HAP-1 (cell line): ENCODE measurements at regions of chrX and their contacts with region 1.

Region 1: GRCh38 chrX:54288277-54288676 is 69.6 kb downstream of the WNK3 start:
- DNase-seq: no peak
- H3K4me3 ChIP-seq: no peak overlapping the region
- H3K4me1 ChIP-seq: peaks cover 1% of the 10 kb centered on the region; the same call in 1 of the 2 replicates
- H3K27me3 ChIP-seq: no peaks in the 10 kb centered on the region

Region 2: GRCh38 chrX:53990171-53990570 is 298.1 kb before region 1 on chrX:
- in situ Hi-C with region 1: no loop called
- DNase-seq: no peak
- H3K4me3 ChIP-seq: no peak overlapping the region
- H3K4me1 ChIP-seq: no peaks in the 10 kb centered on the region
- H3K27me3 ChIP-seq: no peaks in the 10 kb centered on the region

Region 3: GRCh38 chrX:54352677-54353076 is 64.4 kb after region 1 on chrX:
- in situ Hi-C with region 1: loop called (anchors 10 kb)
- DNase-seq: no peak
- H3K4me3 ChIP-seq: no peak overlapping the region
- H3K4me1 ChIP-seq: peaks cover 8% of the 10 kb centered on the region
- H3K27me3 ChIP-seq: no peaks in the 10 kb centered on the region

Region 4: DNA sequence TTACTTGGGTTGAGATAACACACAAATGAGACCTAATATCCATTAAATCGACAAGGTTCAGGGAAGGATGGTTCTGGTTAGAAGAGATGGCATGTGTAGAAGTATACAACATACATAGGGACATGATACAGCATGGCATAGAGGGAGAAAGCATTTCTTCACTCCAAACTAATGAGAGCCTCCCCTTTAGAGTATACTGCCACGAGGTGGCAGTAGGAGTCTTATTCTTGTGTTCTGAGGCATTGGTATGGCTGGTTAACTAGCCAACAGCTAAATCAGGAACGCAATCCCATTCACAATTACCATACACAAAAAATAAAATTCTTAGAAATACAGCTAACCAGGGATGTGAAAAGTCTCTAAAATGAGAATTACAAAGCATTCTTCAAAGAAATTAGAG is 603.3 kb after region 1 on chrX:
- in situ Hi-C with region 1: no loop called
- DNase-seq: peak; percentile 18 to 33
- H3K4me3 ChIP-seq: no peak overlapping the region
- H3K4me1 ChIP-seq: no peaks in the 10 kb centered on the region
- H3K27me3 ChIP-seq: no peaks in the 10 kb centered on the region